Thyroid gland (tissue), 4 donors: ENCODE measurements at regions of chr11 and their contacts with region 1.

Region 1: DNA sequence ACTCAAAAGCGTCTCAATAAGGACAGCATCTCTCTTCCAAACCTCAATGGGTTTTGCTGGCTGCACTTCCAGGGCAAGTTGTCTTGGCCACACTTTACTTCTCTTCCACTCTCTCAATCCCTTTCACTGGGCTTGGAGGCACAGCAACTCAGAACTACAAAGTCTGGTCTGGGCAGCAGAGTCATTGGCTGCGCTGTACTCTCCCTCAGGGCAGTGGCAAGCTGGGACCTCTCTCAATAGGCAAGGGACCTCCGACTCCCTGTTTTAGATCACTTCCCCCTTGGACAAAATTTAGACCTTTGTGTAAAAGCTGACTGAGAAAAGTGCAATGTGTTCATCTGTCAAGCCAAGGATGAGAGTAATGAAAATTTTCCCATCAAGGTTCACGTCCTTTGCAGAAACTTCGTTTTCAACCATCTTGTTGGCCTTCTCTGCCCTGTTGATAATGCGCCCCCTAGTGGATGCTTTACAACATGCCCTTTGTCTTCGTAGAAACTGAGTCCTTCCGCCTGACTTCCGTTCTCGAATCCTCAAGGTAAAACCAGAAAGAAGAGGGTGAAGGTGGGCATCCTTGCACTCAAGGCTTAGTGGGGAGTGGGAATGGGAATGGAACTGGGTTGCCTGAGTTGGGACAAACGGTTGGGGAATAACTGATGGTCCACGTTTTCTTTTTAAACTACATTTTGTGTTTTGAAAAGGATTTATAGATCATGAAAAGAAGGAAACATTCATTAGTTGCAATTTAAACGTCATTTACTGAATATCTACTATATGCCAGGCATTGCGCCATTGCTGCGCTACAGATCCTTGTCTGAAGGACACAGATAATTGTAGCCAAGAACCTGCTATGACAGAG is 99.1 kb downstream of the CD44 start:
- DNase-seq: peak; percentile 40 to 46
- H3K4me3 ChIP-seq: no peak overlapping the region
- H3K27ac ChIP-seq: peak overlapping the region; percentile 81 to 96 (median 82)
- H3K4me1 ChIP-seq: peaks cover 53 to 54% of the 10 kb centered on the region in 2 donors
- H3K27me3 ChIP-seq: no peaks in the 10 kb centered on the region
- CTCF ChIP-seq: peak; percentile 15 to 64 (median 51)
- POLR2A ChIP-seq: no peak

Region 2: GRCh38 chr11:35138943-35139721 is 99.0 kb before region 1 on chr11 and contains the start of gene CD44:
- intact Hi-C with region 1: loop called (anchors 10 kb)
- DNase-seq: peak; percentile 85 to 86
- H3K4me3 ChIP-seq: peak within 1 kb of the TSS; percentile 50 to 82 (median 71)
- H3K27ac ChIP-seq: peak within 1 kb of the TSS; percentile 86 to 89 (median 87)
- H3K4me1 ChIP-seq: peaks cover 30 to 48% of the 10 kb centered on the region in 2 donors
- H3K27me3 ChIP-seq: no peaks in the 10 kb centered on the region
- CTCF ChIP-seq: no peak
- POLR2A ChIP-seq: peak in 1 of 2 donors; percentile 59
- total RNA-seq, gene CD44: 164 to 302 (median 189) TPM

Region 3: GRCh38 chr11:35192347-35192746 is 45.7 kb before region 1 on chr11:
- intact Hi-C with region 1: no loop called
- DNase-seq: peak; percentile 86
- H3K4me3 ChIP-seq: no peak overlapping the region
- H3K27ac ChIP-seq: peak overlapping the region; percentile 1 to 66 (median 44)
- H3K4me1 ChIP-seq: peaks cover 10 to 19% of the 10 kb centered on the region in 2 donors
- H3K27me3 ChIP-seq: no peaks in the 10 kb centered on the region
- CTCF ChIP-seq: no peak
- POLR2A ChIP-seq: no peak